Naive thymus-derived CD4-positive, alpha-beta T cell (primary cell): ENCODE measurements at regions of chr1 and their contacts with region 1.

Region 1: DNA sequence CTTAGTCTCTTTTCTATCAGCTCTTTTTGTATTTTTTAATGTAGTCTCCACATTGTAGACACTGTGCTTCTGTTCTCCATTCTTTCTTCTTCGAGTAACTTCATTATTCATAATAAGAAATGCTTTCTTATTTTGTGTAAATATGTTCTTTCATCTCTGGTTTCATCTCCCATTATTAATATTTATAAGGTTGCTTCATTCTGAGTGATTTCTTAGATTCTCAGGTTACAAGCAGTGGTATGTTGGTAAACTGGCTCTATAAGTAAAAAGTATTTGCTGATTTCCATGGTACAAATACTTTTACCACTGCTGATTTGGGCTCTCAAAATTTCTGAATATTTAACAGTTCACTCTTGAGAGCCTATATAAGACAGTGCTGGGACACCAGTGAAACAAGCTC is 81.3 kb downstream of the CDC14A start:
- DNase-seq: no peak
- ATAC-seq: no peak
- H3K4me3 ChIP-seq: no peak overlapping the region
- H3K4me3 Mint-ChIP-seq: peak overlapping the region in 2 of 10 donors; percentile 13 to 16
- H3K27ac ChIP-seq: peak overlapping the region; percentile 38
- H3K27ac Mint-ChIP-seq: peak overlapping the region in 8 of 9 donors; percentile 41 to 98 (median 84)
- H3K4me1 ChIP-seq: peaks cover 34 to 38% of the 10 kb centered on the region in 2 donors
- H3K4me1 Mint-ChIP-seq: peaks cover 31 to 82% (median 61%) of the 10 kb centered on the region in 7 donors
- H3K27me3 ChIP-seq: no peaks in the 10 kb centered on the region
- H3K27me3 Mint-ChIP-seq: no peaks in the 10 kb centered on the region

Region 2: DNA sequence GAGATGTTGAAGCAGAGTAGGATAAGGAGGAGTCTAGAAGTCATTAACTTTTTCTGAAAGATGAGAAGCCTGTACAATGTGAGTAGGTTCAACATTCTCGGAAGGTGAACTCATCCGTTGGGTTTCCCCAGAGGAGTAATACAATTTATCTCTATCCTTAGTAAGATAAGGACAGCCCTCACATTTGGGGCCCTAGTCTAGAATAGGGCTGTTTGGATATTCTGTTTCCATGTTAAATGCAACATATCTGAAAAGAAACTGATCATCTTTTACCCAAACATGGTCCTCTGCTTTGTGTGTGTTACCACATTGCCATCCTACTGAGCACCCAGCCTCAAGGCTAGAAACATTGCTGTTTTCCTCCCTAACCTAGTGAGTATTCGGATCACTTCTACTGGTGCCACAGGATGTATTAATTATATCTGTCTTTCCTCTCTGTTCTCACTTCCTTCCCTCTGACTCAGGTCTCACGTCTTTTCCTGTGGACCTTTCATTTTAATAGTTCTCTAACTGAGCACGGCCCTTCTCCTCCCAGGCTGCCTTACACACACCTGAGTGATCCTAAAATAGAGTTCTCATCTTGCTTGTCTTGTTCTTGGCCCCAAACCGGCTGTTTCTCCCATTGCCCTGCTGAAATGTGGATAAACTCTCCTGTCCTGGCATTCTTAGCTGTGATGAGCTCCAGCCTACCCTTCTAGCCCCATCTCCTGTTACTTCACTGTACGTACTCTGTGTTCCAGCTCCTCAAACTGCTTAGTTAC is 10.4 kb after region 1 on chr1:
- CTCF ChIA-PET with region 1: interaction called, 3 read pairs
- POLR2A ChIA-PET with region 1: interaction called, 13 read pairs
- intact Hi-C with region 1: loop called in 1 of 2 experiments (anchors 1 kb)
- DNase-seq: peak in 5 of 9 donors; percentile 31 to 42 (median 36)
- ATAC-seq: peak; percentile 6
- H3K4me3 ChIP-seq: peak overlapping the region; percentile 12
- H3K4me3 Mint-ChIP-seq: peak overlapping the region; percentile 66 to 86 (median 81)
- H3K27ac ChIP-seq: peak overlapping the region; percentile 93
- H3K27ac Mint-ChIP-seq: peak overlapping the region; percentile 92 to 99 (median 98)
- H3K4me1 ChIP-seq: peaks cover 83 to 84% of the 10 kb centered on the region in 2 donors
- H3K4me1 Mint-ChIP-seq: peaks cover 53 to 95% (median 87%) of the 10 kb centered on the region in 7 donors
- H3K27me3 ChIP-seq: no peaks in the 10 kb centered on the region
- H3K27me3 Mint-ChIP-seq: no peaks in the 10 kb centered on the region